ENCODE measurements at regions of chr4 and their contacts with region 1.

Region 1: DNA sequence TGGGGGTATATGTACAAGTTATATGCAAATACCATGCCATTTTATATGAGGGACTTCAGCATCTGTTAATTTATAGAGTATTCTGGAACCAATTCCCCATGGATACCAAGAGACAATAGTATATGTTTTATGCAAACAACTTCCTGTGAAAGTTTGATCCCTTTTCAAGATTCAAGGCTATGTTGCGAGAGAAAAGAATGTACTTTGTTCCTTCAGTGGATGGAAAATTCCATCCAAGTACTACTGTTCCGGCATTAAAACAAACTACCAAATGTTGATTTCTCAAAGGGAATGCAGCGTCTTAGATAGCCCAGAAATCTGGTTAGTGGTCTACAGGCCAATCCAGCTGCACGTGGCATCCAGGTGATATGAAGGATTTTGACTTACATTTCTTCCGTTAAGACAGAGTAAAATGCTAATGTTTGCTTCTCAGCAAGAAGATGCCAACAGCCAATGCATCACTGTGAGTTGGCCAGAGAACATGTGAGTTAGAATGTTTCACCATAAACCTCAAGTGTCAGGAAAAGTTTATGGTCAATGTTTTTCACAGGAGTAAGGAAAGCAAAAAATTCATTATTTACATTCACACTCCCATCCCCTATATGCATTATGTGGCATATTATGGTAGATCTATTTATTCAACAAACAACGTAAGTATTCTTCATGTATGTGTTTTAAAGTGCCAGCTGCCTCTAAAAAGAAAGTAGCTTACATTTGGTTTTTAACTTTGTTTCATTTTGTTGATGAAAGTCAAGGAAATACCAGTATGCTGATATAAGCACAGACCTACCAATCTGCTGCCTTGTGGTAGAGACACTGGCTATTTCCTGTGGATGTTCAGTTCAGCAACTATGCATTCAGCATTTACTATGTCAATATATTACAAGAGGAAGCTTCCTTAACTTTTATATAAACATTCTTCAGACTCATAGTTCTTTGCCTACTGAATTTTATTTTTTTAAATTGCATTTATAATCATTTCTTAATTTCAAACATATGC is 44.4 kb downstream of the METTL14 start:
- DNase-seq: no peak
- H3K4me3 ChIP-seq: no peak overlapping the region
- H3K27ac ChIP-seq: no peak overlapping the region
- H3K4me1 ChIP-seq: no peaks in the 10 kb centered on the region
- H3K27me3 ChIP-seq: no peaks in the 10 kb centered on the region
- CTCF ChIP-seq: no peak

Region 2: GRCh38 chr4:118964891-118965411 is 235.4 kb after region 1 on chr4:
- intact Hi-C with region 1: no loop called
- DNase-seq: no peak
- H3K4me3 ChIP-seq: no peak overlapping the region
- H3K27ac ChIP-seq: peak overlapping the region; percentile 73 to 87
- H3K4me1 ChIP-seq: peaks cover 0 to 94% (median 55%) of the 10 kb centered on the region in 4 donors
- H3K27me3 ChIP-seq: no peaks in the 10 kb centered on the region
- CTCF ChIP-seq: no peak

Region 3: GRCh38 chr4:119286377-119287002 is 556.9 kb after region 1 on chr4:
- intact Hi-C with region 1: loop called (anchors 10 kb)
- DNase-seq: no peak
- H3K4me3 ChIP-seq: no peak overlapping the region
- H3K27ac ChIP-seq: peak overlapping the region in 1 of 2 donors; percentile 58
- H3K4me1 ChIP-seq: peaks cover 0 to 30% (median 17%) of the 10 kb centered on the region in 4 donors
- H3K27me3 ChIP-seq: no peaks in the 10 kb centered on the region
- CTCF ChIP-seq: peak; percentile 53 to 77

Measured in tibial artery (tissue), 4 donors.